ENCODE measurements at regions of chr4 and their contacts with region 1.

Region 1: DNA sequence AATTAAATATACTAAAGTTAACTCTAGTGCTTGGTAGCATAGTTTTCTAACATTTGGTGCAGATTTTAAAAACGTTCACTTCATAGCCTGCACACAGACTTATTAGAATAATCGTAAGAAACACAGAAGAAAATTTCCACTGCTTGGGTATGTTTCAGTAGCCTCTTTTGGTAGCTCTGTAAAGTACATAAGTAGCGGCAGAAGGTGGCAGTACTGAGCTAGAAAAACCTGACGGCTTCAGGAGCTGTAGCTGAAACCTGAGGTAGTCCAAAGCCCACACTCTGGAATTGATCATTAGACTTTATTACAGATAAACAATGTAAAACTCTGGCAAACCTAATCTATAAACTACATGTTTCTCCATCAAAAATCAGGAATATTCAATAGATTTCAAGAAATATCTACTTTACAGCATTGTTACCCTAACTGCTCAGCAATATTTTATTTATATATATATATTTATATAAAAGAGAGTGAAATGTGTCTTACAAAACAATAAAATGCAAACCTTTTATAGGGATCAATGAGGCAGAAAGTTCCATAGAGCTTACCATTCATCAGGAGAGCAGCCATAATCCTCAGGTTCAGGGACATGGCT is 88.2 kb downstream of the ATP8A1 start:
- DNase-seq: peak; percentile 81
- H3K4me3 Mint-ChIP-seq: no peak overlapping the region
- H3K27ac Mint-ChIP-seq: no peak overlapping the region
- H3K4me1 Mint-ChIP-seq: peaks cover 10% of the 10 kb centered on the region
- H3K27me3 Mint-ChIP-seq: peaks cover 10% of the 10 kb centered on the region
- CTCF ChIP-seq: peak; percentile 72

Region 2: DNA sequence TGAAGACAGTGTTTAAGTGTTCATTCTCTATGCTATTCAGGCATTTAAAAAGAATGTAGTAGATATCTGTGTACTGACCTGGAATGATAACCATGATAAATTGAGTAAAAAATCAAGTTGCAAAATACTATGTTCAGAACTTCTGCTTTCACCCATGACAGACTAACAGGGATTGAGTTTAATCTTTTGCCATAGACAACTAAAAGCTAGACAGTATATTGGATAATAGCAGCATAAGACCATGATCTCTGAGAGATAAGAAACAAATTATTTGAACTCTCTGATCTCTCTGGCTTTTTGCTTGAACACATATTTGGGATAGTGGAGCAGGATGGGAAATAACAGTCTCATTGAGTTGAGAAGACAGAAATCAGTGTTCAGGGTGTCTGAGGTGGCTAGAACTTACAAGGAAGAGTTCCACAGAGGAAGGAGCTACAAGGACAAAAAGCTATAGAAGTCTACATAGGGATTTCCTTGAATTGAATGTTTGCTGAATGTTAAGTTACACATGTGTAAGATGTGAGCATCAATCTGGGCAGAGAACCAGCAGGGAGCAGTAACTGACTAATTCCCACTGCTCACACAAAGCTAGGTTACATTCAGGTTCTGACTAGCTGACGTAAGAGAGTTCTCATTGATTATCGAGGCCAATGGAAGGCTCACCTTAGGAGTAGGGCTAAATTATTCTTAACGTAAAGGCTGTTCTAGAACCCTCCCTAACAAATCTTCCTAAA is 518.0 kb before region 1 on chr4:
- CTCF ChIA-PET with region 1: no interaction called
- POLR2A ChIA-PET with region 1: no interaction called
- intact Hi-C with region 1: no loop called
- DNase-seq: no peak
- H3K4me3 Mint-ChIP-seq: no peak overlapping the region
- H3K27ac Mint-ChIP-seq: no peak overlapping the region
- H3K4me1 Mint-ChIP-seq: peaks cover 10% of the 10 kb centered on the region
- H3K27me3 Mint-ChIP-seq: no peaks in the 10 kb centered on the region
- CTCF ChIP-seq: no peak

Region 3: GRCh38 chr4:42104521-42104920 is 464.2 kb before region 1 on chr4:
- CTCF ChIA-PET with region 1: no interaction called
- POLR2A ChIA-PET with region 1: no interaction called
- intact Hi-C with region 1: no loop called
- DNase-seq: peak; percentile 61
- H3K4me3 Mint-ChIP-seq: no peak overlapping the region
- H3K27ac Mint-ChIP-seq: no peak overlapping the region
- H3K4me1 Mint-ChIP-seq: peaks cover 15% of the 10 kb centered on the region
- H3K27me3 Mint-ChIP-seq: no peaks in the 10 kb centered on the region
- CTCF ChIP-seq: no peak

Region 4: GRCh38 chr4:42558156-42558555 is 10.6 kb before region 1 on chr4:
- CTCF ChIA-PET with region 1: interaction called, 12 read pairs
- POLR2A ChIA-PET with region 1: no interaction called
- intact Hi-C with region 1: no loop called
- DNase-seq: peak; percentile 31
- H3K4me3 Mint-ChIP-seq: no peak overlapping the region
- H3K27ac Mint-ChIP-seq: no peak overlapping the region
- H3K4me1 Mint-ChIP-seq: peaks cover 26% of the 10 kb centered on the region
- H3K27me3 Mint-ChIP-seq: peaks cover 17% of the 10 kb centered on the region
- CTCF ChIP-seq: no peak

Region 5: DNA sequence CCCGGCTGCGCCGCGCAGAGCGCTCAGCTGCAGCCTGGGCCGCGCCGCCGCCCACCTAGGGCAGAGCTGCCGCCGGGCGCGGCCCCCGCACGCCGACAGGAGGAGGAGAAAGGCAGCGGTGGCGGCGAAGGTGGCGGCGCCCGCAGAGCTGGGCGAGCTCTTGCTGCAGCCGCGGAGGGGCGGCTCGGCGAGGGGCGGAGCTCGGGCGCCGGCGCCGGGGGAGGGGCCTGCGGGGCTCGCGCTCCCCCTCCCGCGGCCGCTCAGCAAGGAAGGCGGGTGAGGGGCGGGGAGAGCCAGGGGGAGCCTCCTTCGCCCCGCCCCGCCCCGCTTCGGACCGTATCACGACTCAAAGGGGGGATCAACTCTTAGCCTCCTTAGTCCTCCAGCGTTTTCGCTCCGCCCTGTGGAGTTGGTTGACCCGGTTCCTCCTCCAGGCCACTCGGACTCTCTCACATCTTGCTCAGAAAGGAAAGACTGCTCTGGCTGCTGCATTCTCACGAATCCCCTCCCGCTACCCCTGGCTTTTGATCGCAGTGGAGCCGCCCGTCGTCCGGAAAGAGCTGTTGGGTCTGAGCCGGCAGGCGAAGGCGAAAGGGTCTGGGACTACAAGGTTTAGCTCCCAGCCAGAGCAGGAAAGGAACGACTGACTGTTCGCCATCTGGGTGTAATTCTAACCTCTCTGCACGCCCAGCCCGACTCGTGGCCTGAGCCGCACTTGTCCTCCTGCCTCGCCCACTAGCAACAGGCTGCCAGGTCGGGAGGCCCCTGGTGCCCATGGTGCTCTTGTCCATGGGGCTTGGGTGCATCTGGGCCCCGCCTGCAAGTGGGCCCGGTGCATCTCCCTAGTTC is 88.5 kb after region 1 on chr4 and contains the start of gene ATP8A1:
- CTCF ChIA-PET with region 1: interaction called, 5 read pairs
- POLR2A ChIA-PET with region 1: interaction called, 6 read pairs
- intact Hi-C with region 1: loop called (anchors 10 kb)
- DNase-seq: peak; percentile 92
- H3K4me3 Mint-ChIP-seq: peak within 1 kb of the TSS; percentile 77
- H3K27ac Mint-ChIP-seq: peak within 1 kb of the TSS; percentile 86
- H3K4me1 Mint-ChIP-seq: peaks cover 29% of the 10 kb centered on the region
- H3K27me3 Mint-ChIP-seq: no peaks in the 10 kb centered on the region
- CTCF ChIP-seq: no peak
- total RNA-seq, gene ATP8A1: 0.19 and 0.34 TPM in 2 replicates

Region 6: DNA sequence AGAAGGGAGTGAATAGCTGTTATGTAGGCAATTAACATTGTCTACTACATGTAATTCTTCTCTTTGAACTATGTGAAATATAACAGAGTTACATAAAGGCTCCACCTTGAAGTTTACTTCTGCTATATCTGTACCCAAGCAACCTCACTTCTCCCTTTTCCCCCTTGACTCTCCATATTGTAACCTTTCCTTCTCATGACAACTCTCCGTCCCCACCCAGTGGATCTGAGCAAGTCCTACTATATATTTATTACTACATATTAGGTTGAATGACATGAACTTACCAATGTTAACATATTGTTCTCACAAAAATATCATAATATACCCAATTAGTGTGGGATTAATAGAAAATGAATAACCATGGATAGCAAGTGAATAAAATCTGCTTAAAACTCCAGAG is 181.4 kb after region 1 on chr4:
- CTCF ChIA-PET with region 1: interaction called, 13 read pairs
- POLR2A ChIA-PET with region 1: no interaction called
- intact Hi-C with region 1: loop called (anchors 1 kb)
- DNase-seq: peak; percentile 38
- H3K4me3 Mint-ChIP-seq: no peak overlapping the region
- H3K27ac Mint-ChIP-seq: no peak overlapping the region
- H3K4me1 Mint-ChIP-seq: no peaks in the 10 kb centered on the region
- H3K27me3 Mint-ChIP-seq: no peaks in the 10 kb centered on the region
- CTCF ChIP-seq: no peak

Region 7: GRCh38 chr4:42768125-42768748 is 199.5 kb after region 1 on chr4:
- CTCF ChIA-PET with region 1: no interaction called
- POLR2A ChIA-PET with region 1: no interaction called
- intact Hi-C with region 1: no loop called
- DNase-seq: no peak
- H3K4me3 Mint-ChIP-seq: no peak overlapping the region
- H3K27ac Mint-ChIP-seq: no peak overlapping the region
- H3K4me1 Mint-ChIP-seq: no peaks in the 10 kb centered on the region
- H3K27me3 Mint-ChIP-seq: no peaks in the 10 kb centered on the region
- CTCF ChIP-seq: no peak

Region 8: GRCh38 chr4:42865572-42866189 is 297.0 kb after region 1 on chr4:
- CTCF ChIA-PET with region 1: interaction called, 63 read pairs
- POLR2A ChIA-PET with region 1: interaction called, 7 read pairs
- intact Hi-C with region 1: loop called (anchors 1 kb)
- DNase-seq: peak; percentile 77
- H3K4me3 Mint-ChIP-seq: no peak overlapping the region
- H3K27ac Mint-ChIP-seq: no peak overlapping the region
- H3K4me1 Mint-ChIP-seq: no peaks in the 10 kb centered on the region
- H3K27me3 Mint-ChIP-seq: peaks cover 14% of the 10 kb centered on the region
- CTCF ChIP-seq: peak; percentile 44

Region 9: GRCh38 chr4:42965326-42965725 is 396.6 kb after region 1 on chr4:
- CTCF ChIA-PET with region 1: interaction called, 15 read pairs
- POLR2A ChIA-PET with region 1: interaction called, 3 read pairs
- intact Hi-C with region 1: loop called (anchors 1 kb)
- DNase-seq: peak; percentile 50
- H3K4me3 Mint-ChIP-seq: no peak overlapping the region
- H3K27ac Mint-ChIP-seq: peak overlapping the region; percentile 69
- H3K4me1 Mint-ChIP-seq: peaks cover 11% of the 10 kb centered on the region
- H3K27me3 Mint-ChIP-seq: no peaks in the 10 kb centered on the region
- CTCF ChIP-seq: peak; percentile 33

Measured in MCF 10A (cell line).